Activated naive CD4-positive, alpha-beta T cell treated with anti-CD3 and anti-CD28 coated beads, Interleukin-2, amount 10 ng/mL, durations not matched to agents 7 days and 5 days (primary cell): ENCODE measurements at regions of chr17 and their contacts with region 1.

Region 1: GRCh38 chr17:4565209-4566141 is 5.1 kb upstream of the GGT6 start:
- DNase-seq: peak; percentile 73
- H3K4me3 Mint-ChIP-seq: no peak overlapping the region
- H3K27ac Mint-ChIP-seq: peak overlapping the region; percentile 25
- H3K4me1 Mint-ChIP-seq: peaks cover 39% of the 10 kb centered on the region
- H3K27me3 Mint-ChIP-seq: peaks cover 11% of the 10 kb centered on the region

Region 2: DNA sequence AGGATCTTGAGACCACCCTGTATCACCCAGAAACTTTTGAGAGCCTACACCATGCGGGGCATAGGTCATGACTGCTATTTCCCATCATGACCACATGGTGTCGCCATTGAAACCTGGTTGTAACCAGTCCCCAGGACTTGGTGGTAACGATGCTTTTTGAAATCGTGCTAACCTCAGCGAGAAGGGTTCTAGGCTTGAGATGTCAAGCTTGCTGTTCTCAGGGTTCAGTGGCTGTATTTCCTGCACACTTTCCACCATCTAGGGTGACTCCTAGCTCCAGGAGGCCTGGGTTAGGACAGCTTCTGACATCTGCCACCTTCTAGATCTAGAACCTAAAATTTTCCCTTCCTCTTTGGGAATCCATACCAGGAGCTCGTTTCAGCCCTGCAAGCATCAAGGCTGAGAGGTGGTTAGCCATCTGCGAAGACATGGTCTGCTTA is 144.8 kb before region 1 on chr17:
- CTCF ChIA-PET with region 1: interaction called, 16 read pairs
- DNase-seq: peak; percentile 75
- H3K4me3 Mint-ChIP-seq: no peak overlapping the region
- H3K27ac Mint-ChIP-seq: no peak overlapping the region
- H3K4me1 Mint-ChIP-seq: peaks cover 5% of the 10 kb centered on the region
- H3K27me3 Mint-ChIP-seq: peaks cover 11% of the 10 kb centered on the region

Region 3: DNA sequence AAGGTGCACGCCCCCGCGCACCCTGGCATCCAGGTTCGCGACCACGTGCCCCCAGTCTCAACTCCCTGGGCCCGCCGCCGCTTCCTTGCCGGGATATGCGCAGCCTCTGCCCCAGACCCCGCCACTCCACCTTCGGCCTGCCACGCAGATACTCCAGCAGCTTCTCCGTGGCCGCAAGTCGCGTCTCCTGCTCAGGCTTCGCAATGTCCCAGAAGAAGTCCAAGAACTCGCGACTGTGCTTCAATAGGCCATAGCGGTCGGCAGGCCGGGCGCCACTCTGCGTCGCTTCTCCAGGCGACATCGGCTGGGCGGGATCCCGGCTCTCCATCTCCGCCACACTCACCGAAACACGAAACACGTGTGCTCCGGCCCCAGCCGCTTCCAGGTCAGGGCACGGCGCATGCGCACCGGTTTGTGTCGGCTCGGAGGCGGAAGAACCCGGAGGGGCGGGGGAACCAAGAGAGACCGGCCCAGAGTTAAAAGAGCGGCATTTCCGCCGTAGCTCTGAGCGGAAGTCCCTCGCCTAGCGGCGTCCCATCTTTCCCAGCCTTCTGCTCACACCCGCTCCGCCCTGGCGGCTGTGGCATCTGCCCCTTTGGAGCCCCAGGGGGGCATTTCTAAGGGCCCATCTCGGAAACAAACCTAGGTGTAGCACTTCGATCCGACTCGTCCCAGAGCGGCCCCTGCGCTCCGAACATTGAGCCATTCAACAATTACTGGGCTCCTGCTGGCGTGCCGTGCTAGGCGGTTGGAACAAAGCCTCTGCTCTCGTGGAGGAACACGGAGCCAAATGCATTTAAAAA is 10.3 kb before region 1 on chr17 and contains the start of gene MYBBP1A:
- CTCF ChIA-PET with region 1: interaction called, 15 read pairs
- DNase-seq: peak; percentile 98
- H3K4me3 Mint-ChIP-seq: peak within 1 kb of the TSS; percentile 84
- H3K27ac Mint-ChIP-seq: peak within 1 kb of the TSS; percentile 93
- H3K4me1 Mint-ChIP-seq: peaks cover 33% of the 10 kb centered on the region
- H3K27me3 Mint-ChIP-seq: no peaks in the 10 kb centered on the region

Region 4: GRCh38 chr17:4576729-4577322 is 11.4 kb after region 1 on chr17:
- CTCF ChIA-PET with region 1: interaction called, 14 read pairs
- DNase-seq: no peak
- H3K4me3 Mint-ChIP-seq: no peak overlapping the region
- H3K27ac Mint-ChIP-seq: no peak overlapping the region
- H3K4me1 Mint-ChIP-seq: peaks cover 11% of the 10 kb centered on the region
- H3K27me3 Mint-ChIP-seq: peaks cover 31% of the 10 kb centered on the region

Region 5: DNA sequence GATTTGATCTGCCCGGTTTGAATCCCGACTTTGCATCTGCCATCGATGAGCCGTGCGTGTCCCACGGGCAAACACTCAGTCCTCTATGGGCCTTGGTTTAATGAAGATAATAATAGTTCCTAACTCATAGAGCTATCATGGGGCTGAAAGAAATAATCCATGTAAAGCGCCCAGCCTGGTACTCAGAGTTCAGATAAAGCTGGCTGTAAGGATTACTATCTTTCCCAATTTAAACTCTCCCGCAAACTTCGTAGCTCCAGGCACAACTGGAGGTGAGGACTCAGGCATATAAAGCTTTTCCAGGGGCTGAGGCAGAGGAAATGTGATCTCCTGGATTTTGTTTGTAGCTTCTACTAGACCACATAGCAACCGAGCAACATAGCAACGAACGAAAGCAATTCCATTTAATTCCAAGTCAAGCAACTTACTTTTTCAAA is 59.7 kb after region 1 on chr17:
- CTCF ChIA-PET with region 1: interaction called, 43 read pairs
- DNase-seq: no peak
- H3K4me3 Mint-ChIP-seq: no peak overlapping the region
- H3K27ac Mint-ChIP-seq: no peak overlapping the region
- H3K4me1 Mint-ChIP-seq: no peaks in the 10 kb centered on the region
- H3K27me3 Mint-ChIP-seq: peaks cover 31% of the 10 kb centered on the region